ENCODE measurements at regions of chr20 and their contacts with region 1.

Region 1: DNA sequence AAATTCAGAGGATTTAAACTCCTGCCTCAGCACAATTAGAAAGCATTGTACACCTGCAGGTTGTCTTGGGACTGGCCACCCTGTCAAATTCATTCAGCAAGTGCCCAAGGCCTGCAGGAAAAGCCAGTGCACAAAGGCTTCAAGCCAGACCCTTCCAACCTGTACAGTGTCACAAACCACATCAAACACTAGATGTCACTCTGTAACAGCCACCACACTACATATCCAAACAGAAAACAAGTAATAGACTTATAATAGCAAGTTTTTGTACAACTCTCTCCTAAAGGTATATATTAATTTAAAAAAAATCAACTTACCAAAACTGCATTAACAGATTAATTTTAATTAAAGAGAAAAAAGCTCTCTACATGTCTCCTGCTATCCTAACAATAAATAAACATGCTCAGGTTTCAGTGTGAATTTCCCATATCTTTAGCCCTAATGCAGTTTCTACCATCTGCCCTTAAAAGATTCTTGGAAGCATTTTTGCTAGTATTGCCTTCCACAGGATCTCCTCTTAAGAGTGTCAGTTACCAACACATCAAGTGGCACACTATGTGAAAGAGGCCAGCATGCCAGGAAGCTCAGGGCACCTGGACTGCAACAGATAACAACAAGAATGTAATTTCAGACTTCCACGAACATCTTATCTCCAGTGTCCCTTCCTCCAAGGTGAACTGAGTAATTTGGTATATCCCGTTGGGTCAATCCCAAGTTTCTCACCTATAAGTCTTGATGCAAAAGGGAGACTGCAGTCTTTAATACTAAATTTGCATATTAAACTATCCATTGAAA is 47.5 kb downstream of the RALGAPA2 start:
- DNase-seq: peak in 3 of 14 experiments; percentile 32 to 49 (median 45)
- ATAC-seq: peak; percentile 55
- H3K4me3 ChIP-seq: no peak overlapping the region
- H3K4me3 Mint-ChIP-seq: no peak overlapping the region
- H3K27ac ChIP-seq: no peak overlapping the region
- H3K27ac Mint-ChIP-seq: no peak overlapping the region
- H3K4me1 ChIP-seq: peaks cover 2% of the 10 kb centered on the region
- H3K4me1 Mint-ChIP-seq: peaks cover 41% of the 10 kb centered on the region
- H3K27me3 ChIP-seq: no peaks in the 10 kb centered on the region
- H3K27me3 Mint-ChIP-seq: no peaks in the 10 kb centered on the region
- CTCF ChIP-seq: peak; percentile 41

Region 2: DNA sequence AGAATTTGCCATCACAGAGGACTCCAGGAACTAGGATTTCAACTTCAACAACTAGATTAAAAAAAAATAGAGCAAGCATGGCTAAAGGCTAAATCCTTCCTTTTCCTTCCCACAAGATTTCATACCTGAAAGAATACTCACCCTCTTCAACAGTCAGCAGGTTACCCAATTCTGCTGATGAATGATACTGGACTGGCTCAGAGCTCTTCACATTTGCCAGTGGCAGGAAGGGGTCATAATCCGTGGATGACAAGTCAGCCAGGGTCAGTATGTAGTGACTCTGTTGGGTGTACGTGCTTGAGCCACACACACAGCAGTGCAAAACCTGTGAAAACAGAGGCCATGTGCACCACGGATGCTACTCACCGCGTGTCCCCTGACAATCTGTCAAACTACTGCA is 144.2 kb before region 1 on chr20:
- CTCF ChIA-PET with region 1: no interaction called
- POLR2A ChIA-PET with region 1: no interaction called
- intact Hi-C with region 1: no loop called
- DNase-seq: no peak
- ATAC-seq: no peak
- H3K4me3 ChIP-seq: no peak overlapping the region
- H3K4me3 Mint-ChIP-seq: no peak overlapping the region
- H3K27ac ChIP-seq: no peak overlapping the region
- H3K27ac Mint-ChIP-seq: no peak overlapping the region
- H3K4me1 ChIP-seq: no peaks in the 10 kb centered on the region
- H3K4me1 Mint-ChIP-seq: no peaks in the 10 kb centered on the region
- H3K27me3 ChIP-seq: no peaks in the 10 kb centered on the region
- H3K27me3 Mint-ChIP-seq: no peaks in the 10 kb centered on the region
- CTCF ChIP-seq: no peak

Region 3: DNA sequence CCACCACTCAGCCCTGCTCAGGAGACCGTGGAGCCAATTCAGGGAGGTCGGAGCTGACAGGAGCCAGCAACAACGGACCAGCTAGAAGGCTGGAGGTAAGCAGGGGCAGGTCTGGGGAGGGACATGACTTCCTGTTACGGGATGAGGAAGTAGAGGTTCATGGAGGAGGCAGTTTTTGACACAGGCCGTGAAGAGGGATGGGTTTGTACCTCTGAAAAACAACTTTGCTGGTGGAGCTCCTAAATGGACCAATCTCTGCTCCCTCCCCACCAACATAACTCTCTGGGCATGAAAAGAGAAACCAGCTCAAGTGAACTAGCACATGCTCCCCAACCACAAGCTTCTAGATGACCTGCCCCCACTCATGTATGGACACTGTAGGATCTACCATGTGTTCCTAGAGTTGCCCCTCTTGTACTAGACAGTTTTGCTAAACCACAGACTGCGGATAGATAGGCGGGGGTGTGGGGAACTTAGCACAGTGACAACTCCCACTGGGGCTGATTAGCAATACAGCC is 16.1 kb after region 1 on chr20:
- CTCF ChIA-PET with region 1: no interaction called
- POLR2A ChIA-PET with region 1: no interaction called
- intact Hi-C with region 1: no loop called
- DNase-seq: peak in 2 of 14 experiments; percentile 12 to 24
- ATAC-seq: no peak
- H3K4me3 ChIP-seq: no peak overlapping the region
- H3K4me3 Mint-ChIP-seq: no peak overlapping the region
- H3K27ac ChIP-seq: no peak overlapping the region
- H3K27ac Mint-ChIP-seq: peak overlapping the region; percentile 29
- H3K4me1 ChIP-seq: peaks cover 19% of the 10 kb centered on the region
- H3K4me1 Mint-ChIP-seq: peaks cover 71% of the 10 kb centered on the region
- H3K27me3 ChIP-seq: no peaks in the 10 kb centered on the region
- H3K27me3 Mint-ChIP-seq: no peaks in the 10 kb centered on the region
- CTCF ChIP-seq: no peak

Region 4: GRCh38 chr20:20824924-20825584 is 160.1 kb after region 1 on chr20:
- CTCF ChIA-PET with region 1: no interaction called
- POLR2A ChIA-PET with region 1: no interaction called
- intact Hi-C with region 1: loop called (anchors 1 to 2 kb)
- DNase-seq: peak in 13 of 14 experiments; percentile 10 to 72 (median 29)
- ATAC-seq: no peak
- H3K4me3 ChIP-seq: no peak overlapping the region
- H3K4me3 Mint-ChIP-seq: no peak overlapping the region
- H3K27ac ChIP-seq: no peak overlapping the region
- H3K27ac Mint-ChIP-seq: no peak overlapping the region
- H3K4me1 ChIP-seq: peaks cover 4% of the 10 kb centered on the region
- H3K4me1 Mint-ChIP-seq: no peaks in the 10 kb centered on the region
- H3K27me3 ChIP-seq: peaks cover 2 to 5% of the 10 kb centered on the region in 2 experiments
- H3K27me3 Mint-ChIP-seq: peaks cover 47% of the 10 kb centered on the region
- CTCF ChIP-seq: peak; percentile 67

Measured in CD4-positive, alpha-beta T cell (primary cell).